IMR-90 (cell line): ENCODE measurements at regions of chr11 and their contacts with region 1.

Region 1: DNA sequence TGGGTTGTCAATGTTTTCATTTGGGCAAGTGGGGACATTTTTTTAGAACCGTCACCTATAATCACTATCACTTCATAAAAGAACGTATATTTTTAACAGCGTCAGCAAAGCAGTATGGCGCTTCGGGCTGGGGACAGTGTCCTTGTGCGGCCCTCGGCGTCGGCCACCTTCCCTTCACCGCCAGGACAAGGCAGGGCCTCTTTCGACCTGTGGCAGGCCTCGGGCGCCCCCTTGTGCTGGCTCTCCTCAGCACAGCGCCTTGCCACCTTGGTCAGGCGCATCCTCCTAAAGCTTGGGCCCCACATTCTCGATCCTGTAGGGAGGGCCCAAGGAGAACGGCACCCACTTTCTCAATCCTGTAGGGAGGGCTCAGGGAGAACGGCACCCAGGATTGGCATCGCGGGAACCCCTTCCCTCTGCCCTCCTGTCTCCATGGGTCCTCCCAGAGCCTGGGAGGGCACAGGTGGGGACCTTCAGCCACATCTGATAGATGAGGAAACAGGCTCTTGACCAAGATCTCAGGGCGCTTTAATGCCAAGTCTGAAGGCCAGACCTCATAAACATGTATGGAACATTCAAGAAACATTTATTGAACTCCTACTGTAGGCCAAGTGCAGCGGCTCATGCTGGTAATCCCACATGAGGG is 11.5 kb upstream of the FADD start:
- DNase-seq: peak; percentile 49
- ATAC-seq: peak; percentile 94
- H3K4me3 ChIP-seq: no peak overlapping the region
- H3K27ac ChIP-seq: no peak overlapping the region
- H3K4me1 ChIP-seq: no peaks in the 10 kb centered on the region; the same call in 1 of the 2 replicates
- H3K27me3 ChIP-seq: peaks cover 2% of the 10 kb centered on the region; the same call in 1 of the 2 replicates
- CTCF ChIP-seq: peak; percentile 91
- POLR2A ChIP-seq: peak; percentile 50; the same call in 1 of the 2 replicates
- RAD21 ChIP-seq: peak; percentile 99

Region 2: DNA sequence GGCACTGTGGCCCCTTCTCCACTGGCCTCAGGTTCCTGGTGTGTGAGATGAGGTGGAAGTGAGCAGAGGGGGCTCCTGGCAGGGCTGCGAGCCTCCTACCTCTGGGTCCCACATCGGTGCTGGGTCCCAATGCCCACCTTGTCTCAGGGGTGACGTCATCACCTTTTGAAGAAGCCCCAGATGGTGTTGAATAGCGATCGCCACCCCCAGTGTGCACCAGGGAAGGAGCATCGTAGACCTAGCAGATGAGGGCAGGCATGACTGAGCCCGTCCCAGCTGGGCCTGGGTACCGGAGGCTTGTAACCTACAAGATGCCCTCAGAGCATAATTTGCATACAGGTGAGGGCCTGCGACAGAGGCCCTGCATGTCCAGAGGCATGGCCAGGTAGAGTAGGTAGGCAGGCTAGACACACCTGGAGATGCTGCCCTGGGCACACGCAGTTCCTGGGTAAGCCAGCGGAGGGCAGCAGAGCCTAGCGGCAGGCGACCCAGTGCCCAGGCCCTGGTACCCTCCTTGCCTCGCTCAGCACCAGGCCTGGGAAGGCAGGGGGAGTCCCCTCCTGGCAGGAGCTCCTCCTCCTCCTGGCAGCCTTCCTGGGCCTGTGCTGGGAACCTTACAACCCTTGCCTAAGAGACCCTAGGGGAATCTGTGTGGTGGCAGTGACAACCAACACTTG is 1090.4 kb before region 1 on chr11:
- CTCF ChIA-PET with region 1: no interaction called
- POLR2A ChIA-PET with region 1: no interaction called
- dilution Hi-C with region 1: no loop called
- in situ Hi-C with region 1: loop called (anchors 25 kb)
- intact Hi-C with region 1: no loop called
- DNase-seq: peak; percentile 73
- ATAC-seq: peak; percentile 94
- H3K4me3 ChIP-seq: no peak overlapping the region
- H3K27ac ChIP-seq: no peak overlapping the region
- H3K4me1 ChIP-seq: peaks cover 3% of the 10 kb centered on the region; the same call in 1 of the 2 replicates
- H3K27me3 ChIP-seq: no peaks in the 10 kb centered on the region
- CTCF ChIP-seq: peak; percentile 97
- POLR2A ChIP-seq: peak; percentile 52; the same call in 1 of the 2 replicates
- RAD21 ChIP-seq: peak; percentile 99

Region 3: DNA sequence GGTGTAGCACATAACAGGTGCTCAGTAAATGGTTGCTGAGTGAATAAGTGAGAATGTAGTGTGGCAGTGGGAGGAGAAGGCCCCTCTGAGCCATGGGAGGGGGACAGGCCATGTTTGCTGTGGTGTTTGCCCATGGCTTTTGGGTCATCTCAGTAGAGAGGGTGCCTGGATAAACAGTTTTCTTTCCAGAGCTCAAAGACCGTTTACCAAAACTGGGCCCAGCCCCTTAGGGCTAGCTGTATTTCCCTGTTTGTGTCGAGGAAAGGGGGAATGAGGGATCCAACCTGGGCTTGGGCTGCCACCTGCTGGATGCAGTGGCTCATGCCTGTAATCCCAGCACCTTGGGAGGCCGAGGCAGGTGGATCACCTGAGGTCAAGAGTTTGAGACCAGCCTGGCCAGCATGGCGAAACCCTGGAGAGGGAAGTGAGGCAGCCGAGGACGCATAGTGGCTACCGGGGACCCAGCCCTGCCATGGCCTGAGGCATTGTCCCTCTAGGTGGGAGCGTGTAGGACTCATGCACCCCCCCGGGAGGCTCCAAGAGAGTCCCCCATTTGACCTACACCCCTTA is 507.8 kb before region 1 on chr11:
- CTCF ChIA-PET with region 1: no interaction called
- POLR2A ChIA-PET with region 1: no interaction called
- dilution Hi-C with region 1: no loop called
- in situ Hi-C with region 1: loop called (anchors 5 kb)
- intact Hi-C with region 1: loop called (anchors 2 kb)
- DNase-seq: no peak
- ATAC-seq: no peak
- H3K4me3 ChIP-seq: no peak overlapping the region
- H3K27ac ChIP-seq: no peak overlapping the region
- H3K4me1 ChIP-seq: no peaks in the 10 kb centered on the region
- H3K27me3 ChIP-seq: peaks cover 3% of the 10 kb centered on the region; the same call in 1 of the 2 replicates
- CTCF ChIP-seq: peak; percentile 30
- POLR2A ChIP-seq: no peak
- RAD21 ChIP-seq: peak; percentile 43

Region 4: DNA sequence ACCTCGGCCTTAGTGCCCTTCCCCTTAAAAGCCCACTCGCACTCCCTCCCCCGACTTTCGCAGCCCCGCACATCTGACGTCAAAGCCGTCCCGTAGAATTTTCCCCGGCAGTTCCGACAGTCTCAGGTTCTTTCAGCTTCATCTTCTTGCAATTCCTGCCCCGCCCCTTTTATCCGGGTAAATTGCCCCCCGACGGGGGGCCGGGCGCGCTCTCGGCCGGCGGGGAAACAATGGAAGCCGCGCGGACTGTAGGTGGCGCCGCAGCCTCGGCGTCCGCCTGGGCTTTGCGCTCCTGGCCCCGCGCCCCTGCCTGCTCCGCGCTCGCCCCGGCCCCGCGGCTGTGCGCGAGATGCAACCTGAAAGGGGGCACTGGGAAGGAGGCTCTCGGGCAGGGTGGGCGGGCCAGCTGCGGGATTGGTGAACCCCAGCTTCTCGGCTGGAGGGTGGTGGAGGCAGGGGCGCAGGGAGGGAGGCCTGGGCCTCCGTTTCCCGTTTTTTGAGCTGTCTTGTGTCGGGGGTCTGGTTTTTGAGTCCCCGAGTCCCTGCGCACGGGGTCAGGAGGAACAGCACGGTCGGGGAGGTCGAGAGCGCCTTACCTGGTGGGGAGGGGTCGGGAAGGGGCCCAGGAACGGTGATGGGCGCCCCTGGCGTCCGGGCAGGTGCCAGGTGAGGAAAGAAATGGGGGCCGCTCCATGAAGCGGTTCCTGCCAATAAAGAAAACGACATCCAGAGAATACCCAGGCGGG is 486.9 kb before region 1 on chr11:
- CTCF ChIA-PET with region 1: interaction called, 7 read pairs
- POLR2A ChIA-PET with region 1: no interaction called
- dilution Hi-C with region 1: no loop called
- in situ Hi-C with region 1: no loop called
- intact Hi-C with region 1: loop called (anchors 1 kb)
- DNase-seq: no peak
- ATAC-seq: peak; percentile 64
- H3K4me3 ChIP-seq: no peak overlapping the region
- H3K27ac ChIP-seq: no peak overlapping the region
- H3K4me1 ChIP-seq: peaks cover 2% of the 10 kb centered on the region
- H3K27me3 ChIP-seq: peaks cover 68% of the 10 kb centered on the region
- CTCF ChIP-seq: peak; percentile 61
- POLR2A ChIP-seq: no peak
- RAD21 ChIP-seq: peak; percentile 69

Region 5: DNA sequence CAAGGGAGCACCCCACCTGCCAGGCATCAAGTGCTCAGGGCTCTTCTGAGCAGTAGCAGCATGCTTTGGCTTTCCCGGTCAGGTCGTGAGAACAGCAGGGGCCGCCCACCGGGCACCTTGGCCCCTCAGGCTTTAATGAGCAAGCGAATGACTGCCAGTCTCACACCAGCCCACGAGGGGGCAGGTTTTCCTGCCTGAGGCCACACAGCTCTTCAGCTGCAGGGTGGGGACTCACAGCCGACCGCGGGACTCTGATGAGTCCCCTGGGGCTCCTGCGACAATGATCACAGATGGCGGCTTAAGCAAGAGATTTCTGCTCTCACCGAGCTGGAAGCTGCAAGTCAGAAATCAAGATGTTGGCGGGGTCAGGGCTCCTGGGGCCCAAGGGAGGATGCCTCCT is 473.5 kb before region 1 on chr11:
- CTCF ChIA-PET with region 1: interaction called, 8 read pairs
- POLR2A ChIA-PET with region 1: no interaction called
- dilution Hi-C with region 1: no loop called
- in situ Hi-C with region 1: loop called (anchors 10 kb)
- intact Hi-C with region 1: no loop called
- DNase-seq: peak; percentile 23
- ATAC-seq: peak; percentile 77
- H3K4me3 ChIP-seq: no peak overlapping the region
- H3K27ac ChIP-seq: no peak overlapping the region
- H3K4me1 ChIP-seq: no peaks in the 10 kb centered on the region
- H3K27me3 ChIP-seq: peaks cover 71% of the 10 kb centered on the region
- CTCF ChIP-seq: peak; percentile 65
- POLR2A ChIP-seq: no peak
- RAD21 ChIP-seq: peak; percentile 77

Region 6: GRCh38 chr11:69909561-69910496 is 281.8 kb before region 1 on chr11:
- CTCF ChIA-PET with region 1: interaction called, 5 read pairs
- POLR2A ChIA-PET with region 1: no interaction called
- dilution Hi-C with region 1: no loop called
- in situ Hi-C with region 1: loop called (anchors 5 kb)
- intact Hi-C with region 1: loop called (anchors 1 kb)
- DNase-seq: no peak
- ATAC-seq: peak; percentile 21; the same call in 1 of the 2 replicates
- H3K4me3 ChIP-seq: no peak overlapping the region
- H3K27ac ChIP-seq: no peak overlapping the region
- H3K4me1 ChIP-seq: no peaks in the 10 kb centered on the region
- H3K27me3 ChIP-seq: peaks cover 3% of the 10 kb centered on the region; the same call in 1 of the 2 replicates
- CTCF ChIP-seq: peak; percentile 50
- POLR2A ChIP-seq: no peak
- RAD21 ChIP-seq: peak; percentile 44

Region 7: GRCh38 chr11:69918938-69919650 is 272.5 kb before region 1 on chr11:
- CTCF ChIA-PET with region 1: interaction called, 7 read pairs
- POLR2A ChIA-PET with region 1: no interaction called
- dilution Hi-C with region 1: no loop called
- in situ Hi-C with region 1: loop called (anchors 5 kb)
- intact Hi-C with region 1: loop called (anchors 1 kb)
- DNase-seq: peak; percentile 57
- ATAC-seq: peak; percentile 68
- H3K4me3 ChIP-seq: no peak overlapping the region
- H3K27ac ChIP-seq: no peak overlapping the region
- H3K4me1 ChIP-seq: peaks cover 7% of the 10 kb centered on the region
- H3K27me3 ChIP-seq: no peaks in the 10 kb centered on the region; the same call in 1 of the 2 replicates
- CTCF ChIP-seq: peak; percentile 92
- POLR2A ChIP-seq: 0 out of 2 replicates have a peak, but pooled peaks have one; percentile 26
- RAD21 ChIP-seq: peak; percentile 88

Region 8: GRCh38 chr11:70082829-70083228 is 108.8 kb before region 1 on chr11:
- CTCF ChIA-PET with region 1: no interaction called
- POLR2A ChIA-PET with region 1: no interaction called
- dilution Hi-C with region 1: no loop called
- in situ Hi-C with region 1: no loop called
- intact Hi-C with region 1: no loop called
- DNase-seq: no peak
- ATAC-seq: no peak
- H3K4me3 ChIP-seq: no peak overlapping the region
- H3K27ac ChIP-seq: no peak overlapping the region
- H3K4me1 ChIP-seq: peaks cover 7% of the 10 kb centered on the region; the same call in 1 of the 2 replicates
- H3K27me3 ChIP-seq: no peaks in the 10 kb centered on the region
- CTCF ChIP-seq: peak; percentile 30
- POLR2A ChIP-seq: no peak
- RAD21 ChIP-seq: peak; percentile 23; the same call in 1 of the 2 replicates